CD8-positive, alpha-beta memory T cell (primary cell): ENCODE measurements at regions of chr1 and their contacts with region 1.

Region 1: DNA sequence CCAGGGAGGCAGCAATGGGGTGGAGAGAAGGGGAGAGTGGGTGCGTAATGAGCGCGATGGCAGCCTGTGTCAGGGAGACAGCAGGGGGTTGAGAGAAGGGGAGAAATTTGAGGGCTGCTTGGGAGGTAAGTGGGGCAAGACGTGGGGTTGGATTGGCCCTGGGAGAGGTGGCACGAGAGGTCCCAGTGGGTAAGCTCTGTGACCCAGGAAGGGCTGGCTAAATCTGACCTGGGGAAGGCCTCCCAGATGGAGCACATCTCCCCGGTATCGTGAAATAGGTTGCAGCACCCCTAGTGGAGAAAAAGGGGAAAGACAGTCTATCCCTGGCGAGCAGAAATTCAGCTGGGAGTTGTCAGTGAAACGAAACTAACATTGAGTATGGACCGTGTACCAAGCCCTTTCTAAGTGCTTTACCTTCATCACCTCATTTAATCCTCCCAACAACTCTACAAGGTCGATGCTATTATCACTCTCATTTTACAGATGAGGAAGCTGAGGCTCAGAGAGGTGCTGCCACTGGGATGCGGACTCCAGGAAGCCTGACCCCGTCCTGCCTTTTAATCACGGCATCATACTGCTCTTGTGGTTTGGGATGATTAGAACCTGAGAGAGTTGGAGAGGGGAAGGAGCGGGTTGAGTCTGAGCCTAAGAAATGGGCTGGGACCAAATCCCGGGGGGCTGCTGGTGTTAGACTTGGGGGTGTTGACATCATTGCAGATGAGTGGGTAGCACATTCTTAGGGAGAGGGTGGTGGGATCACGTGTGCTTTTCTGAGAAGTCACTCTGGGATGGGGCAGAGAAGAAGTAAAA is 56.6 kb upstream of the RPL11 start:
- DNase-seq: peak; percentile 20 to 72 (median 65)
- H3K4me3 ChIP-seq: peak overlapping the region; percentile 72
- H3K4me3 Mint-ChIP-seq: peak overlapping the region; percentile 50 to 78 (median 72)
- H3K27ac ChIP-seq: no peak overlapping the region
- H3K27ac Mint-ChIP-seq: peak overlapping the region; percentile 4 to 92 (median 78)
- H3K4me1 ChIP-seq: peaks cover 14% of the 10 kb centered on the region
- H3K4me1 Mint-ChIP-seq: peaks cover 19 to 28% (median 20%) of the 10 kb centered on the region in 3 donors
- H3K27me3 ChIP-seq: no peaks in the 10 kb centered on the region
- H3K27me3 Mint-ChIP-seq: no peaks in the 10 kb centered on the region

Region 2: DNA sequence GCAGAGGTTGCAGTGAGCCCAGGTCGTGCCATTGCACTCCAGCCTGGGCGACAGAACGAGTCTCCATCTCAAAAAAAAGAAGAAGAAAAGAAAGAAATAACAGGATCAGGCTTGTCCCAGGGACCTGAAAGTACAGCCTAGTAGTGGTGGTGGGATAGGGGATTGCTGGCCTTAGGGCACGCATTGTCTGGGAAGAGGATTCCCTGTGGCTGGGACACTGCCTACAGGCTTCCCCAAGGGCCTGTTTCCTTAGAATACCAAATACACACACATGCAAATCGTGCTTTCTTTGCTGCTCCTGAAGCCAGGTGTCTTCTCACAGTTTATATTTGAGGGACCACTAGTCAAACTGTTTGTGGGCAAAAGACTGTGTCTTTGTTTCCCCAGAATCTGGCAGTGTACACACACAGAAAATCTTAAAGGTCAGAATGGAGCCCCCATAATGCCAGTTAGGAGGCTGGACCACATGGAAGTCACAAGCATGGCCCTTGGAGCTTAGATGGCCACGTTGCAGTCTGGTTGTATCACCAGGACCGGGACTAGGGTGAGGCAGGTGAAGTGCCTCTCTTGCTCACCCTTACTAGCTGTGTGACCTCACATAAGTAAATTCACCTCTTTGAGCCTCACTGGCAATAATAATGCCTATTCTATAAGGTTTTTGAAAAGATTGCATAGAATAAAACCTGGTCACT is 138.4 kb before region 1 on chr1:
- CTCF ChIA-PET with region 1: interaction called, 97 read pairs
- POLR2A ChIA-PET with region 1: interaction called, 5 read pairs
- DNase-seq: no peak
- H3K4me3 ChIP-seq: no peak overlapping the region
- H3K4me3 Mint-ChIP-seq: no peak overlapping the region
- H3K27ac ChIP-seq: no peak overlapping the region
- H3K27ac Mint-ChIP-seq: no peak overlapping the region
- H3K4me1 ChIP-seq: no peaks in the 10 kb centered on the region
- H3K4me1 Mint-ChIP-seq: peaks cover 3 to 5% (median 5%) of the 10 kb centered on the region in 3 donors
- H3K27me3 ChIP-seq: no peaks in the 10 kb centered on the region
- H3K27me3 Mint-ChIP-seq: peaks cover 0 to 6% of the 10 kb centered on the region in 2 donors

Region 3: GRCh38 chr1:23539698-23540266 is 95.3 kb before region 1 on chr1:
- CTCF ChIA-PET with region 1: interaction called, 341 read pairs
- POLR2A ChIA-PET with region 1: interaction called, 22 read pairs
- DNase-seq: peak; percentile 82 to 94 (median 88)
- H3K4me3 ChIP-seq: no peak overlapping the region
- H3K4me3 Mint-ChIP-seq: peak overlapping the region in 5 of 7 donors; percentile 29 to 65 (median 62)
- H3K27ac ChIP-seq: peak overlapping the region; percentile 22
- H3K27ac Mint-ChIP-seq: peak overlapping the region in 7 of 8 donors; percentile 12 to 85 (median 74)
- H3K4me1 ChIP-seq: peaks cover 13% of the 10 kb centered on the region
- H3K4me1 Mint-ChIP-seq: peaks cover 12 to 17% (median 16%) of the 10 kb centered on the region in 3 donors
- H3K27me3 ChIP-seq: no peaks in the 10 kb centered on the region
- H3K27me3 Mint-ChIP-seq: peaks cover 0 to 6% of the 10 kb centered on the region in 2 donors

Region 4: GRCh38 chr1:23571465-23571864 is 63.6 kb before region 1 on chr1:
- CTCF ChIA-PET with region 1: interaction called, 19 read pairs
- POLR2A ChIA-PET with region 1: no interaction called
- DNase-seq: no peak
- H3K4me3 ChIP-seq: no peak overlapping the region
- H3K4me3 Mint-ChIP-seq: no peak overlapping the region
- H3K27ac ChIP-seq: no peak overlapping the region
- H3K27ac Mint-ChIP-seq: no peak overlapping the region
- H3K4me1 ChIP-seq: peaks cover 13% of the 10 kb centered on the region
- H3K4me1 Mint-ChIP-seq: peaks cover 7 to 22% (median 16%) of the 10 kb centered on the region in 3 donors
- H3K27me3 ChIP-seq: peaks cover 13% of the 10 kb centered on the region
- H3K27me3 Mint-ChIP-seq: peaks cover 18 to 31% of the 10 kb centered on the region in 2 donors

Region 5: DNA sequence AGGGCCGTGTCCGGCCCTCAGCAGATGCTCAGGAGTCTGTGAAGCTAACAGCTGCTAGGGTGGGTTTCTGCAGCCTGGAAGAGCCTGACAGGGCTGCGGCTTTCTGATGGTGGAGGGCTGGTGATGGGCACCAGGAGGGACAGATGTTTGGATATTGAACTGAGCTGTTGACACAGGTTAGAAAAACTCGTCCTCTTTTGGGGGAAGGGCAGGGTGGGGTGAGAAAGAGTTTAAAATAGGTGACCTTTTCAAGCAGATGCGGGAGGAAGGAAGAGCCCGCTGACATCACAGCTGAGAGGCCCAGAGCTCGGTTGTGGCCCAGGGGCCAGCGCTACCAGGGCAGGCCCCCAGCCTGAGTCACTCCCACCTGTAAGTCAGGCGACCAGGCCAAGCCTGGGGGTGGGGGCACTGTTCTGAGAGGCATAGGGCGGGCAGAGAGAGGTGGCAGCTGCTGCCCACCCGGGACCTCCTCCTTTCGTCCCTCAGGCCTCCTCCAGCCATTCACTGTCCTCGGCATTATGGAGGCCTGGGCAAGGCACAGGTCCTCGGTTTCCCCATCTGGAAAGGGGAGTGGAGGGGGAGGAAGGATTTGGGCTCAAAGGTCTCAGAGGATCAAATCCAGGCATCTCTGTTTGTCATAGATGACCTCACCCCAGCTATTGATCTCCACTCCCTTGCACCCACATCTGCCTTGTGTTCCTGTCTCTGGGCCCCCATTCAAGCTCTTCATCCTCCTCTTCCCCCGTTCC is 43.4 kb before region 1 on chr1:
- CTCF ChIA-PET with region 1: interaction called, 42 read pairs
- POLR2A ChIA-PET with region 1: no interaction called
- DNase-seq: peak in 1 of 5 donors; percentile 74
- H3K4me3 ChIP-seq: no peak overlapping the region
- H3K4me3 Mint-ChIP-seq: peak overlapping the region in 6 of 7 donors; percentile 57 to 86 (median 64)
- H3K27ac ChIP-seq: no peak overlapping the region
- H3K27ac Mint-ChIP-seq: peak overlapping the region; percentile 76 to 97 (median 91)
- H3K4me1 ChIP-seq: peaks cover 63% of the 10 kb centered on the region
- H3K4me1 Mint-ChIP-seq: peaks cover 54 to 66% (median 62%) of the 10 kb centered on the region in 3 donors
- H3K27me3 ChIP-seq: no peaks in the 10 kb centered on the region
- H3K27me3 Mint-ChIP-seq: no peaks in the 10 kb centered on the region

Region 6: GRCh38 chr1:23613191-23614031 is 21.6 kb before region 1 on chr1:
- CTCF ChIA-PET with region 1: interaction called, 120 read pairs
- POLR2A ChIA-PET with region 1: interaction called, 8 read pairs
- DNase-seq: peak; percentile 21 to 66 (median 44)
- H3K4me3 ChIP-seq: peak overlapping the region; percentile 33
- H3K4me3 Mint-ChIP-seq: peak overlapping the region; percentile 2 to 68 (median 58)
- H3K27ac ChIP-seq: peak overlapping the region; percentile 9
- H3K27ac Mint-ChIP-seq: peak overlapping the region; percentile 73 to 97 (median 92)
- H3K4me1 ChIP-seq: peaks cover 64% of the 10 kb centered on the region
- H3K4me1 Mint-ChIP-seq: peaks cover 57 to 77% (median 73%) of the 10 kb centered on the region in 3 donors
- H3K27me3 ChIP-seq: no peaks in the 10 kb centered on the region
- H3K27me3 Mint-ChIP-seq: peaks cover 0 to 2% of the 10 kb centered on the region in 2 donors

Region 7: DNA sequence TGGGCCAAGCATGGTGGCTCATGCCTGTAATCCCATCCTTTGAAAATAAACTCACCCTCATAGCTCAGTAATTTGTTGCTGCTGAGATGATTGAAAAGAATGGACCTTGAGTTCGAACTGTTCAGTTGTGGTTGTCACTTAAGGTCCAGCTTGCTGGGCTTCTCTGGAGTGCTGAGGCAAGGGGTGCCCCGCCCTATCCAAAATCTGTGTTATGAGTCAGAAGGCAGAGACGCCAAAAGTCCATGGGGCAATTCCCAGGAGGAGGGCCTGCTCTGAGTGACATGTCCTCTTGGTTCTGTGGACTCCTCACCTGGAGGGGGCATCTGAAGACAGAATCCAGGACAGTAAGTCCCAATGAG is 412.0 kb after region 1 on chr1:
- CTCF ChIA-PET with region 1: no interaction called
- POLR2A ChIA-PET with region 1: no interaction called
- DNase-seq: no peak
- H3K4me3 ChIP-seq: no peak overlapping the region
- H3K4me3 Mint-ChIP-seq: no peak overlapping the region
- H3K27ac ChIP-seq: no peak overlapping the region
- H3K27ac Mint-ChIP-seq: no peak overlapping the region
- H3K4me1 ChIP-seq: no peaks in the 10 kb centered on the region
- H3K4me1 Mint-ChIP-seq: no peaks in the 10 kb centered on the region
- H3K27me3 ChIP-seq: no peaks in the 10 kb centered on the region
- H3K27me3 Mint-ChIP-seq: peaks cover 1 to 16% of the 10 kb centered on the region in 2 donors